ENCODE measurements at regions of chr18 and their contacts with region 1.

Region 1: DNA sequence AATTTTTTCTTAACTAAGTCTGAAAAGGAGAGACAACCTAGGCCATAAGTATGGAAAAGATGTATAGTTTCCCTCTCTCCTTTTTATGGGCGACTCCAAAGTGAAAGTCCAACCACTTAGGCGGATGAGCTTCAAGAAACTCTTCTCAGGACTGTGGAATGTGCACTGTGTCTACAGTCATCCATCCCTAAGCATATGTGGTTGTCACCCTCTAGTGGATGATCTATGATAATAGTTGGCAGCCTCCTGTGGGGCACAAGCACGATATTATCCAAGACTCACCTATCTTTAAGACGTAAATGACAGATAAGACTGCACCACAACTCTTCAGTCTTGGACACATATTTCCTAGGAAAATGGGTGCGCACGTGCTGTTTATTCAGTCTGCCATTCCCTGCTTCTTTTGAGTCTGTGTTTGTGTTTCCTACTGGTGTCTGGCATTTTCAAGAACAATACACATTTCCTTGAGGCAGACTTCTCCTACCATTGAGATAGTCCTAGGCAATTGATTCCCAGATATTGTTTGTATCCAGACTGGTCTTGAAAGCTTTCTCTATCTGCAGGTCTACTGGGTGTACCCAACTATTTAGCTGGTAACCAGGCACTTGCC is 145.5 kb upstream of the CTAGE1 start:
- DNase-seq: no peak
- H3K4me3 ChIP-seq: no peak overlapping the region
- H3K27ac ChIP-seq: no peak overlapping the region
- H3K4me1 ChIP-seq: peaks cover 8 to 22% (median 10%) of the 10 kb centered on the region in 3 donors
- H3K27me3 ChIP-seq: peaks cover 0 to 92% (median 0%) of the 10 kb centered on the region in 4 donors
- CTCF ChIP-seq: peak; percentile 20 to 87 (median 72)
- POLR2A ChIP-seq: no peak

Region 2: DNA sequence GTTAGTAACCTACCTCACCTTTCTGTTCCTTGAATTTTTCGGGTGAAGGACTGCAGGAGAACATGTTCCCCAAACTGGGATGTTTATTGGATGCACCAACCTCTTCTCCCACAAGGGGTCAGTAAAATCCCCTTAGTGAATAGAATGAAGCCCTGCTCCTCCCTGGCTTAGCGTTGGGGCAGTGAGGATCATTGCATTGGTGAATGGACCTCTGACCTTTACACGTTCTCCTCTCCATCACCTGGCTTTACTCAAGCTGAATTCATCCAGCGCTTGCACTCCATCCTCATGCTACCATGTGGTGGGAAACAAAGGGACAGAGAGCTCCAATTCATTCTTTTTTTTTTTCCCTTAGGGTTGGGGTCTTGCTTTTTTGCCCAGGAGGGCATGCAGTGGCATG is 665.4 kb before region 1 on chr18:
- intact Hi-C with region 1: loop called (anchors 10 kb)
- DNase-seq: no peak
- H3K4me3 ChIP-seq: no peak overlapping the region
- H3K27ac ChIP-seq: no peak overlapping the region
- H3K4me1 ChIP-seq: peaks cover 0 to 12% (median 0%) of the 10 kb centered on the region in 3 donors
- H3K27me3 ChIP-seq: peaks cover 0 to 17% (median 0%) of the 10 kb centered on the region in 4 donors
- CTCF ChIP-seq: peak in 5 of 6 experiments; percentile 34 to 62 (median 53)
- POLR2A ChIP-seq: no peak

Region 3: GRCh38 chr18:22170421-22171262 is 392.6 kb before region 1 on chr18:
- intact Hi-C with region 1: loop called (anchors 10 kb)
- DNase-seq: no peak
- H3K4me3 ChIP-seq: peak overlapping the region; percentile 46 to 89 (median 60)
- H3K27ac ChIP-seq: peak overlapping the region; percentile 74 to 86 (median 81)
- H3K4me1 ChIP-seq: peaks cover 20 to 69% (median 22%) of the 10 kb centered on the region in 3 donors
- H3K27me3 ChIP-seq: peaks cover 30 to 100% (median 43%) of the 10 kb centered on the region in 4 donors
- CTCF ChIP-seq: no peak
- POLR2A ChIP-seq: no peak

Region 4: DNA sequence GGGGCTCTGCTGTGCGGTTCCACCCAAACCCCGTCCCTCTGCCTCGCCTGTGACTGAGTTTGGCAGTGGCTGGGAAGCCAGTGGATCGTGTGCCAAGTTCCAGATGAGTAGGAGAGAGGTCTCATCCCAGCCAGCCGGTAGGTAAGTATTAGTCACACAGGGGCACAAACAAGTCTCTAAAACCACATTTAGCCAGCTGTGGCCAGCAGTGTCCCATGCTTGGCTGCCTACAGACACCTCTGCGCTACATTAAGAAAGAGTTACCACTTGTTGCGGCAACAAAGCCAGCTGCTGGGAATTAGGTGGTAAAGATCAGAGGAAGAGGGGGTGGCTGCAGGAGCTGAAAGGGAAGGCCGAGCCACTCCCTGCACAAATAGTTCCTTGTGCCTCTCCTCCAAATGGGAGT is 312.6 kb before region 1 on chr18:
- intact Hi-C with region 1: no loop called
- DNase-seq: no peak
- H3K4me3 ChIP-seq: no peak overlapping the region
- H3K27ac ChIP-seq: no peak overlapping the region
- H3K4me1 ChIP-seq: peaks cover 4 to 20% (median 10%) of the 10 kb centered on the region in 3 donors
- H3K27me3 ChIP-seq: peaks cover 0 to 15% (median 2%) of the 10 kb centered on the region in 4 donors
- CTCF ChIP-seq: no peak
- POLR2A ChIP-seq: no peak

Region 5: GRCh38 chr18:22503803-22504202 is 59.4 kb before region 1 on chr18:
- intact Hi-C with region 1: loop called (anchors 10 kb)
- DNase-seq: no peak
- H3K4me3 ChIP-seq: no peak overlapping the region
- H3K27ac ChIP-seq: peak overlapping the region in 2 of 4 donors; percentile 47 to 64
- H3K4me1 ChIP-seq: peaks cover 3 to 9% (median 6%) of the 10 kb centered on the region in 3 donors
- H3K27me3 ChIP-seq: no peaks in the 10 kb centered on the region
- CTCF ChIP-seq: no peak
- POLR2A ChIP-seq: no peak